ENCODE measurements at regions of chr10 and their contacts with region 1.

Region 1: GRCh38 chr10:107317594-107317993 is 153.1 kb upstream of the SORCS1 start:
- DNase-seq: no peak
- ATAC-seq: no peak
- H3K4me3 ChIP-seq: no peak overlapping the region
- H3K4me3 Mint-ChIP-seq: no peak overlapping the region
- H3K27ac ChIP-seq: no peak overlapping the region
- H3K27ac Mint-ChIP-seq: no peak overlapping the region
- H3K4me1 ChIP-seq: no peaks in the 10 kb centered on the region
- H3K4me1 Mint-ChIP-seq: no peaks in the 10 kb centered on the region
- H3K27me3 ChIP-seq: no peaks in the 10 kb centered on the region
- H3K27me3 Mint-ChIP-seq: no peaks in the 10 kb centered on the region
- CTCF ChIP-seq: no peak

Region 2: DNA sequence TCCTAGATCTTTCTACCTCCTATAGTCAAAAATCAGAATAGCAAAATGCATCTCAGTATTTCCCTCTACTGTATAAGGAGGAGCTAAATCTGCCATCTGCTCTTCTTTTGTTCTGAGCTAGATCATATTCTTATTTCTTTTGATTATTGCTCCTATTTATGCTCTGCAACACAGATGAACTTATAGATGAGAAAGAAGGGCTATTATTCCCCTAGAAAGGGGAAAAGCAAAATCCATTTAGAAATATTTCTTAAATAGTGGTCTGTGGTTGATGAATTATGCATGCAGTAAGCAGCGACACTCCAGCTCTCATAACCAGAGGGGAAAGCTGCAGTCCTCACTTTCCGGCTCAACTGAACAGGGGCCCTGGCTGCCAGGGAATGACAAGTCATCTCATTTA is 54.2 kb after region 1 on chr10:
- CTCF ChIA-PET with region 1: no interaction called
- POLR2A ChIA-PET with region 1: no interaction called
- intact Hi-C with region 1: loop called in 1 of 2 experiments (anchors 2 kb)
- DNase-seq: no peak
- ATAC-seq: no peak
- H3K4me3 ChIP-seq: no peak overlapping the region
- H3K4me3 Mint-ChIP-seq: no peak overlapping the region
- H3K27ac ChIP-seq: no peak overlapping the region
- H3K27ac Mint-ChIP-seq: no peak overlapping the region
- H3K4me1 ChIP-seq: no peaks in the 10 kb centered on the region
- H3K4me1 Mint-ChIP-seq: no peaks in the 10 kb centered on the region
- H3K27me3 ChIP-seq: no peaks in the 10 kb centered on the region
- H3K27me3 Mint-ChIP-seq: no peaks in the 10 kb centered on the region
- CTCF ChIP-seq: no peak

Measured in CD8-positive, alpha-beta T cell (primary cell).